ENCODE measurements at regions of chr6 and their contacts with region 1.

Region 1: GRCh38 chr6:158972241-158973233 is 27.5 kb downstream of the RSPH3 start:
- DNase-seq: peak; percentile 47
- ATAC-seq: 0 out of 3 replicates have a peak, but pooled peaks have one; percentile 37
- H3K4me3 ChIP-seq: no peak overlapping the region
- H3K27ac ChIP-seq: no peak overlapping the region
- H3K4me1 ChIP-seq: no peaks in the 10 kb centered on the region
- H3K27me3 ChIP-seq: no peaks in the 10 kb centered on the region
- CTCF ChIP-seq: peak; percentile 72
- EP300 ChIP-seq: no peak
- POLR2A ChIP-seq: no peak
- RAD21 ChIP-seq: peak; percentile 72

Region 2: DNA sequence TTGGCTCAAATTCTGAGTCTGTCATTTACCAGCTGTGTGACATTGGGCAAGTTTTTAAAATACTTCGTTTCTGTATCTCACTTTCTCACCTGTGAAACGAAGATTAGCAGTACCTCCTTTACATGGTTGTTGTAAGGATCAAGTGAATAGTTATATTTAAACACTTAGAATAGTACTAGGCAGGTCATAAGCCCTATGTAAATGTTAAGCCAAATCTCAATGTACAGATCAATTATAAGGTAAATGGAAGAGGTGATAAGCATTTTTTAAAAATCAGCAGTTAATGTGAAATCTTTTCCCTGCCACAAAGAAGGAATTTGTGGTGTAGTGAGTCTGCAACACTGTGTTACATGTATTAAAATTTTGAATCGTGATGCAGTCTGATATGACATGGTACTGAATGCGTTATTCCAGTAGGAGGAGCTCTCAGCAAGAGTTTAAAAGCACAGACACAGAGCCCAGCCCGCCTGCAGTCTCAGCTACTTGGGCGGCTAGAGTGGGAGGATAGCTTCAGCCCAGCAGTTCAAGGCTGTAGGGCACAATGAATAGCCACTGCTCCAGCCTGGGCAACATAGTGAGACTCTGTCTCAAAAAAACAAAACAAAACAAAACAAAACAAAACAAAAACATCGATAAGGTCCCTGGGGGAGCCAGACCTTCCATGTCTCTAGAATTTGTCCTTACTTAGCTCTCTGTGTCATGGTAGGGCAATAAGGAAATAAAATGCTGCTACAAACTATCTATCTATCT is 758.4 kb before region 1 on chr6:
- CTCF ChIA-PET with region 1: no interaction called
- POLR2A ChIA-PET with region 1: no interaction called
- in situ Hi-C with region 1: loop called (anchors 25 kb)
- intact Hi-C with region 1: no loop called
- DNase-seq: peak; percentile 84
- ATAC-seq: peak; percentile 100
- H3K4me3 ChIP-seq: no peak overlapping the region
- H3K27ac ChIP-seq: no peak overlapping the region
- H3K4me1 ChIP-seq: no peaks in the 10 kb centered on the region
- H3K27me3 ChIP-seq: no peaks in the 10 kb centered on the region
- CTCF ChIP-seq: peak; percentile 95
- EP300 ChIP-seq: no peak
- POLR2A ChIP-seq: no peak
- RAD21 ChIP-seq: peak; percentile 92

Region 3: DNA sequence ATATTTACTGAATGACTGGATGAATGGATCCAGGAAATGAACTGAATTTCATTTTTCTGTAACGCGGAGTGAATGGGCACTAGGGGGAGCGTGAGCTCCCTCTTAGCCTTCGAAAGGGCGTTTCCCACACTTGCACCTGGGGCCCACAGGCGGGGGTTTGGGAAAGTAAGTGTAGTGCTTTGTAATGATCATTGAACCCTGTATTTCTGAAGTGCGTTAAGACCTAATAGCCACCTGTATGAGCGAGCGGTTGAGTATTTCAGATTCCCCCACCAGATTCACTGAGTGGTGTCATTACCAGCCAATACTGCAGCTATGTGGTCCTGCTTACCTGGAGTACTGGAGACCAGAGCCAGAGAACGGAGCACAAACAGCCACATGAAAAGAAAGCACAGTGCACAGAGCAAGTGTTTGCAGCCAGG is 312.2 kb before region 1 on chr6:
- CTCF ChIA-PET with region 1: interaction called, 9 read pairs
- POLR2A ChIA-PET with region 1: no interaction called
- in situ Hi-C with region 1: no loop called
- intact Hi-C with region 1: loop called (anchors 1 kb)
- DNase-seq: no peak
- ATAC-seq: peak; percentile 79
- H3K4me3 ChIP-seq: no peak overlapping the region
- H3K27ac ChIP-seq: no peak overlapping the region
- H3K4me1 ChIP-seq: peaks cover 17% of the 10 kb centered on the region
- H3K27me3 ChIP-seq: peaks cover 9 to 47% of the 10 kb centered on the region in 2 experiments; a peak in 4 of 5 replicates
- CTCF ChIP-seq: peak; percentile 72
- EP300 ChIP-seq: no peak
- POLR2A ChIP-seq: no peak
- RAD21 ChIP-seq: peak; percentile 52; the same call in 1 of the 2 replicates

Region 4: DNA sequence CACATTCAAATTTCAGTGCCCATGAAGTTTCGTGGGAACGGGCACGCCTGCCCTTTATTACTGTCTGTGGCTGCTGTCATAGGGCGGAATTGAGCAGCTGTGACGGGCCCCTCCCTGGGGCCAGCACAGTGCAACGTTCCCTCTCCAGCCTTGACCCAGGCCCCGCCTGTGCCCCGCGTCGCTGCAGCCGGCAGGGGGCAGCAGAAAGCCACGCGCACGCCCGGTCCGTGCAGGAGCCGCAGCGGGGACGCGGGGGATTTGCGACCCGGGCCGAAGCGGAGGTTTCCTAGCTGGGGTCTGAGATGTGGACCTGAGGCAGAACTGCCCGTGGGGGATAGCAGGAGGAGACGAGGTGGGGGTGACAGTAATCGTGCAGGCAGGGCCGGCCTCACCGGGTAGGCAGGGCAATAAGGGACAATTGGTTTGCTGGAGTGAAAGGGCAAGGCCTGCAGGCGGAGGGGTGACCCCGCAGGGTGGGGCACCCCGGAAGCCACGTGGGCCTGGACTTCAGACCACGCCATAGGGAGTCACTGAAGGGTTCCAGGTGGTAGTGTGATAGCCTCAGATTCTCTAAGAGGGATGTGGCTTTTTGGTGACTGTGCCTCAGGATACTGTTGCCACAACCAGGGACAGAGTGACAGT is 268.2 kb before region 1 on chr6:
- CTCF ChIA-PET with region 1: interaction called, 37 read pairs
- POLR2A ChIA-PET with region 1: interaction called, 3 read pairs
- in situ Hi-C with region 1: loop called (anchors 5 kb)
- intact Hi-C with region 1: loop called (anchors 1 kb)
- DNase-seq: peak; percentile 64
- ATAC-seq: peak; percentile 96
- H3K4me3 ChIP-seq: peak overlapping the region; percentile 45 to 77 (median 62)
- H3K27ac ChIP-seq: no peak overlapping the region
- H3K4me1 ChIP-seq: peaks cover 26% of the 10 kb centered on the region
- H3K27me3 ChIP-seq: peaks cover 4 to 17% of the 10 kb centered on the region in 2 experiments; a peak in 3 of 5 replicates
- CTCF ChIP-seq: peak; percentile 100
- EP300 ChIP-seq: no peak
- POLR2A ChIP-seq: 0 out of 4 replicates have a peak, but pooled peaks of 1 of the 2 experiments have one; percentile 15
- RAD21 ChIP-seq: peak; percentile 97

Region 5: GRCh38 chr6:158718461-158719046 is 254.0 kb before region 1 on chr6:
- CTCF ChIA-PET with region 1: interaction called, 7 read pairs
- POLR2A ChIA-PET with region 1: no interaction called
- in situ Hi-C with region 1: no loop called
- intact Hi-C with region 1: loop called (anchors 1 kb)
- DNase-seq: peak; percentile 38
- ATAC-seq: peak; percentile 89
- H3K4me3 ChIP-seq: no peak overlapping the region
- H3K27ac ChIP-seq: no peak overlapping the region
- H3K4me1 ChIP-seq: peaks cover 10% of the 10 kb centered on the region
- H3K27me3 ChIP-seq: peaks cover 0 to 4% of the 10 kb centered on the region in 2 experiments; a peak in 1 of 5 replicates
- CTCF ChIP-seq: peak; percentile 82
- EP300 ChIP-seq: no peak
- POLR2A ChIP-seq: no peak
- RAD21 ChIP-seq: peak; percentile 66; the same call in 1 of the 2 replicates

Region 6: DNA sequence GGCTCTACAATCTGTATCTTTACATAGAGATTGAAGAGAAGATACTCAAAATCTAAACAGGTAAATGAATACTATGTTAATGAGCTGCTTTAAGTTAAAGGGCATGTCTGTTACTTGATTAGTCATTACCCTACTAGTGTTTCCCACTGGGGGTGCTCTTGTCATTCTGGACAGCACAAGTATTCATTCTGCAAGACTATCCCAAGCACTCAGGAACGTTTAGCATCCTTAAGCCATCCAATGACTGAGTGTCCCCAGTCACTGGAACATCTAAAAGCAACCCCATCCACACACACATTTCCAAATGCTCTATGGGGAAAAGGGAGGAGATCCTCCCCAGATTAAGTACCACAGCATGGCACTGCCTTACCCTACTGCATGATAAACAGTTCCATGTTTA is 179.1 kb before region 1 on chr6:
- CTCF ChIA-PET with region 1: interaction called, 19 read pairs
- POLR2A ChIA-PET with region 1: no interaction called
- in situ Hi-C with region 1: loop called (anchors 5 kb)
- intact Hi-C with region 1: loop called (anchors 1 kb)
- DNase-seq: peak; percentile 66
- ATAC-seq: peak; percentile 84
- H3K4me3 ChIP-seq: no peak overlapping the region
- H3K27ac ChIP-seq: no peak overlapping the region
- H3K4me1 ChIP-seq: peaks cover 45% of the 10 kb centered on the region
- H3K27me3 ChIP-seq: no peaks in the 10 kb centered on the region
- CTCF ChIP-seq: peak; percentile 50
- EP300 ChIP-seq: no peak
- POLR2A ChIP-seq: no peak
- RAD21 ChIP-seq: peak; percentile 64

Region 7: DNA sequence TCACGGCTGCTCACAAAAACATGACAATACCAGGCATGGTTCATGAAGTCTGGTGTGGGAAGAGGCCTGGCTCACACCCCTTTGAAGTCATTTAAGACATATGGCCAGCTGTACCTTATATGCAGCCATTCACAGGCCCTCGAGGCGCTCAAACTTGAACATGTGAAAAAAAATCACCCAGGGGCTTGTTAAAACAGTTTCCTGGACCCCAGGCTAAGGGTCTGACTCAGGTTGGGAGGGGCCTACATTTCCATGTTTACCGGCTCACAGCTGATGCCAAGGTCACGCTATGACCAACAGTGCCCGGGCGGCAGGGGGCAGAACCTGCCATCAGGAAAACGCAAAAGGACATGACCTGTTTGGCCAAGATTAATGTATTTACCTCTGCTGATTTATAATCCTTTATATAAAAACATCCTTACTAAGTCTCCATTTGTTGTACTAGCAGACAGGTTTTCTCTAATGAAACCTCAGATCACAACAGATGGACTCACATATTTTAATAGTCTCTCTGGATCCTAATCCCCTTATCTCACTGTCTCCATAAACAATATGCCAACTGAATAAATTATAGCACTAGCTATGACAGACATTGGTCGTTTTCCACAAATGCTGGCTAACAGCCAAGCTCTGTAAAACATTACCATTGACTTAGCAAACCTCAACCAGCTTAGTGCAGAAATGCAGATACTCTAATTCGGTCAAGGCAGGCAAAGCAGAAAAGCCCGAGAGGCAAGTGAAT is 173.3 kb before region 1 on chr6:
- CTCF ChIA-PET with region 1: interaction called, 19 read pairs
- POLR2A ChIA-PET with region 1: no interaction called
- in situ Hi-C with region 1: loop called (anchors 5 kb)
- intact Hi-C with region 1: no loop called
- DNase-seq: peak; percentile 72
- ATAC-seq: peak; percentile 85
- H3K4me3 ChIP-seq: no peak overlapping the region
- H3K27ac ChIP-seq: peak overlapping the region; percentile 52
- H3K4me1 ChIP-seq: peaks cover 71% of the 10 kb centered on the region
- H3K27me3 ChIP-seq: no peaks in the 10 kb centered on the region
- CTCF ChIP-seq: peak; percentile 70
- EP300 ChIP-seq: peak in 1 of 2 experiments; percentile 46; a peak in 1 of 4 replicates
- POLR2A ChIP-seq: no peak
- RAD21 ChIP-seq: peak; percentile 57; the same call in 1 of the 2 replicates

Region 8: DNA sequence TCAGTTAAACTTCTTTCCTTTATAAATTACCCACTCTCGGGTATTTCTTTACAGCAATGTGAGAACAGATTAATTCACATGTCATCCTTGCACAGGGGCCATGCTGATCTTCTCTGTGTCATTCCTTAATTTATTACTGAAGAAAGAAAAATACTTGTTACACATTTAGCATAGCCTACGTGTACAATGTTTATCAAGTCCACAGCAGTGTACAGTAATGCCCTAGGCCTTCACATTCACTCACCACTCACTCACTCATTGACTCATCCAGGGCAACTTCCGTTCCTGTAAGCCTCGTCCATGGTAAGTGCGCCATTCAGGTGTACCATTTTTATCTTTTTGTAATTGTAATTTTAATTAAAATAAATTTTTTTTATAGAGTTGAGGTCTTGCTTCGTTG is 46.1 kb before region 1 on chr6:
- CTCF ChIA-PET with region 1: no interaction called
- POLR2A ChIA-PET with region 1: no interaction called
- in situ Hi-C with region 1: no loop called
- intact Hi-C with region 1: no loop called
- DNase-seq: peak; percentile 13
- ATAC-seq: no peak
- H3K4me3 ChIP-seq: no peak overlapping the region
- H3K27ac ChIP-seq: no peak overlapping the region
- H3K4me1 ChIP-seq: no peaks in the 10 kb centered on the region
- H3K27me3 ChIP-seq: no peaks in the 10 kb centered on the region
- CTCF ChIP-seq: no peak
- EP300 ChIP-seq: no peak
- POLR2A ChIP-seq: no peak
- RAD21 ChIP-seq: no peak

Measured in HepG2 (cell line).